ENCODE measurements at regions of chr6 and their contacts with region 1.

Region 1: DNA sequence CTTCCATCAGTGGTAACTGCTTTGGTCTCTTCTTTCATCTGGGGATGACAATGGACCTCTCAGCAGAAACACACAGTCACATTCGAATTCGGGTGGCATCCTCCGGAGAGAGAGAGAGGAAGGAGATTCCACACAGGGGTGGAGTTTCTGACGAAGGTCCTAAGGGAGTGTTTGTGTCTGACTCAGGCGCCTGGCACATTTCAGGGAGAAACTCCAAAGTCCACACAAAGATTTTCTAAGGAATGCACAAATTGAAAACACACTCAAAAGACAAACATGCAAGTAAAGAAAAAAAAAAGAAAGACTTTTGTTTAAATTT is 6.1 kb downstream of the EDN1 start:
- DNase-seq: no peak
- ATAC-seq: no peak
- H3K4me3 ChIP-seq: no peak overlapping the region
- H3K27ac ChIP-seq: no peak overlapping the region
- H3K4me1 ChIP-seq: peaks cover 8% of the 10 kb centered on the region
- H3K27me3 ChIP-seq: no peaks in the 10 kb centered on the region
- CTCF ChIP-seq: no peak
- EP300 ChIP-seq: no peak
- POLR2A ChIP-seq: no peak
- RAD21 ChIP-seq: no peak

Region 2: DNA sequence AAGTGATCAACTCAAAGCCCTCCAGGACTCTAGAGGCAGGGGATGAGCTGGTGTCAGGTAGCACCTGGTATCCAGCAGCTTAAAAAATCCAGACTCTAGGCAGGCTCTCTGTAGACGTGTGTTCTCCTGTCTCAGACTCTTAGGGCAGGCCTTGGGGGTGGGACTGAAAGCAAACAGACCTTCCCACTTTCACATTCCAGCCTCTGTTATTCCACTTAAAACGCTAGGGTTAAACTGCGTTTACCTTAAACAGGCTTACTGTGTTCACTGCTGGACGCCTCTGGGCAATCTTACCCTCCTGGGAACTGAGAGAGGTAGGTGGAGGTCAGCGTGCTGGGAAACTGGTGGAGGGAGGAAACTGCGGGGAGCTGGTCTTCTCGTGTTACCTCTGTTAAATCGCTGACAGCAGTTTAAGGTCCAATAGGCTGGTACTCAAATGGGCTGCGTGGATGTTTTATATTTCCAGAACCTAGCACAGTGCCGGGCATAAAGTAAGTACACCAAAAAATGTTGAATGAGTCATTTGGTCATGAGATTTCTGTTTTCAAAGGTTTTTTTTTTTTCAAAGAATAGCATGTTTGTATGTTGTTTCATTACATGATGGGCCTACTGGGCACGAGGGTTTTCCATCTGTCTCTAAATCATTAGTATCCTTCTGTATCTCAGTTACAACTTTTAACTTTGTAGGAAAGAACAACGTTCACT is 1775.0 kb before region 1 on chr6 and contains the start of gene GCNT2:
- CTCF ChIA-PET with region 1: no interaction called
- POLR2A ChIA-PET with region 1: no interaction called
- RAD21 ChIA-PET with region 1: no interaction called
- SMC1A ChIA-PET with region 1: no interaction called
- in situ Hi-C with region 1: no loop called
- intact Hi-C with region 1: no loop called
- DNase-seq: no peak
- ATAC-seq: peak; percentile 75
- H3K4me3 ChIP-seq: peak within 1 kb of the TSS; percentile 31; the same call in 1 of the 2 replicates
- H3K27ac ChIP-seq: peak within 1 kb of the TSS; percentile 53
- H3K4me1 ChIP-seq: peaks cover 14% of the 10 kb centered on the region
- H3K27me3 ChIP-seq: no peaks in the 10 kb centered on the region
- CTCF ChIP-seq: no peak
- EP300 ChIP-seq: no peak
- POLR2A ChIP-seq: no peak
- RAD21 ChIP-seq: no peak
- polyA plus RNA-seq, gene GCNT2: 5.8 to 7.2 TPM

Region 3: DNA sequence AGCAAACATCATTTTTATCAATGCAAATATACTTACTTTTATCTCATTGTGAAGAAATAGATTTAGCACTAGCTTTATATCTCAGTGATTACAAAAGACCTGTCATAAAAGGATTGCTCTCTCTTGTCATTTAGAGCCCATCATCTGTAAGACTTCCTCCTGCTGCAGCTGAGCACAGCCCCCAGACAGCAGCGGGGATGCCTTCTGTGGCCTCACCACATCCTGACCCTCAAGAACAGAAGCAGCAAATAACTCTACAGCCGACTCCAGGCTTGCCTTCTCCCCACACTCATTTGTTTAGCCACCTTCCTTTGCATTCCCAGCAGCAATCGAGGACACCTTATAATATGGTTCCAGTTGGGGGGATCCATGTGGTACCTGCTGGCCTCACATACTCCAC is 133.1 kb before region 1 on chr6:
- CTCF ChIA-PET with region 1: no interaction called
- POLR2A ChIA-PET with region 1: no interaction called
- RAD21 ChIA-PET with region 1: no interaction called
- SMC1A ChIA-PET with region 1: no interaction called
- in situ Hi-C with region 1: no loop called
- intact Hi-C with region 1: no loop called
- DNase-seq: no peak
- ATAC-seq: peak; percentile 54
- H3K4me3 ChIP-seq: no peak overlapping the region
- H3K27ac ChIP-seq: no peak overlapping the region
- H3K4me1 ChIP-seq: no peaks in the 10 kb centered on the region
- H3K27me3 ChIP-seq: no peaks in the 10 kb centered on the region
- CTCF ChIP-seq: no peak
- EP300 ChIP-seq: no peak
- POLR2A ChIP-seq: no peak
- RAD21 ChIP-seq: no peak

Region 4: GRCh38 chr6:12313992-12314805 is 18.0 kb after region 1 on chr6:
- CTCF ChIA-PET with region 1: interaction called, 64 read pairs
- POLR2A ChIA-PET with region 1: interaction called, 6 read pairs
- RAD21 ChIA-PET with region 1: interaction called, 10 read pairs
- SMC1A ChIA-PET with region 1: interaction called, 70 read pairs
- in situ Hi-C with region 1: no loop called
- intact Hi-C with region 1: no loop called
- DNase-seq: no peak
- ATAC-seq: no peak
- H3K4me3 ChIP-seq: no peak overlapping the region
- H3K27ac ChIP-seq: no peak overlapping the region
- H3K4me1 ChIP-seq: no peaks in the 10 kb centered on the region
- H3K27me3 ChIP-seq: no peaks in the 10 kb centered on the region
- CTCF ChIP-seq: no peak
- EP300 ChIP-seq: no peak
- POLR2A ChIP-seq: no peak
- RAD21 ChIP-seq: no peak

Region 5: DNA sequence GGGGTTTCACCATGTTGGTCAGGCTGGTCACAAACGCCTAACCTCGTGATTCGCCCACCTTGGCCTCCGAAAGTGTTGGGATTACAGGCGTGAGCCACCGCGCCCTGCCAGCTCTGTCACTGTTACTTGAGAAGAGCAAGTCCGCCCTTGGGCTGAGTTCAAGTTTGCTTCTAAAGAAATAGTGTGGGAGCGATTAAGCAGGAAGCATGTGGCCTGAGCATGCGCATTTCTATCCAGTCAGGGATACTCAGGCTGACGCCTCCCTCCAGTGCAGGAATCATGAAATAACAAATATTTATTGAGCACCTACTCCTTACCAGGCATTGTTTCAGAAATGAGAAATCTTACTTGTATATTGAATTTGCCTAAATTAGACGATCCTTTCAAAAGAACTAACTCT is 160.1 kb after region 1 on chr6:
- CTCF ChIA-PET with region 1: no interaction called
- POLR2A ChIA-PET with region 1: no interaction called
- RAD21 ChIA-PET with region 1: no interaction called
- SMC1A ChIA-PET with region 1: no interaction called
- in situ Hi-C with region 1: no loop called
- intact Hi-C with region 1: no loop called
- DNase-seq: no peak
- ATAC-seq: no peak
- H3K4me3 ChIP-seq: no peak overlapping the region
- H3K27ac ChIP-seq: no peak overlapping the region
- H3K4me1 ChIP-seq: no peaks in the 10 kb centered on the region
- H3K27me3 ChIP-seq: no peaks in the 10 kb centered on the region
- CTCF ChIP-seq: no peak
- EP300 ChIP-seq: no peak
- POLR2A ChIP-seq: no peak
- RAD21 ChIP-seq: no peak

Region 6: GRCh38 chr6:12595161-12595811 is 299.1 kb after region 1 on chr6:
- CTCF ChIA-PET with region 1: interaction called, 49 read pairs
- POLR2A ChIA-PET with region 1: interaction called, 5 read pairs
- RAD21 ChIA-PET with region 1: interaction called, 384 read pairs
- SMC1A ChIA-PET with region 1: interaction called, 382 read pairs
- in situ Hi-C with region 1: loop called (anchors 5 kb)
- intact Hi-C with region 1: no loop called
- DNase-seq: no peak
- ATAC-seq: peak; percentile 75
- H3K4me3 ChIP-seq: no peak overlapping the region
- H3K27ac ChIP-seq: no peak overlapping the region
- H3K4me1 ChIP-seq: peaks cover 14% of the 10 kb centered on the region
- H3K27me3 ChIP-seq: no peaks in the 10 kb centered on the region
- CTCF ChIP-seq: no peak
- EP300 ChIP-seq: no peak; a peak in 2 of 4 replicates
- POLR2A ChIP-seq: no peak
- RAD21 ChIP-seq: no peak

Region 7: DNA sequence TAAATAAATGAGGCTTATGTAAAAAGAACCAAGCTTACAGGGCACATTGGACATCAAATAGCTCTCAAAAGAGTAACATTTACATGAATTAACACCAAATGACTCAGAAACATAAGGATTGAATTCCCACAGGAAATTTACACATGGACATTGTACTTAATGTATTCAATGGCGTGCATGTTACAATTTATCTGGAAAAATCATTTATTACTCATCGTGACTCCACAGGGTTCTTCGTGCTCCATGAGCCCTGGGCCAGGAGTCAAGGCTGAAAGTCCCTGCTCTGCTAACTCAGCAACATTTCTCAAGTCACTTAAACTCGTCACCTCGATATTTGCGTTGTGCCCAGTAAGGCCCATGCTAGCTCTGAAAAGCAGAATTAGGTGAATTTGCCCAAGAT is 578.8 kb after region 1 on chr6:
- CTCF ChIA-PET with region 1: no interaction called
- POLR2A ChIA-PET with region 1: no interaction called
- RAD21 ChIA-PET with region 1: no interaction called
- SMC1A ChIA-PET with region 1: no interaction called
- in situ Hi-C with region 1: no loop called
- intact Hi-C with region 1: no loop called
- DNase-seq: no peak
- ATAC-seq: no peak
- H3K4me3 ChIP-seq: no peak overlapping the region
- H3K27ac ChIP-seq: no peak overlapping the region
- H3K4me1 ChIP-seq: no peaks in the 10 kb centered on the region
- H3K27me3 ChIP-seq: peaks cover 1 to 2% of the 10 kb centered on the region in 2 experiments
- CTCF ChIP-seq: no peak
- EP300 ChIP-seq: no peak
- POLR2A ChIP-seq: no peak
- RAD21 ChIP-seq: no peak